CD8-positive, alpha-beta T cell (primary cell): ENCODE measurements at regions of chr11 and their contacts with region 1.

Region 1: DNA sequence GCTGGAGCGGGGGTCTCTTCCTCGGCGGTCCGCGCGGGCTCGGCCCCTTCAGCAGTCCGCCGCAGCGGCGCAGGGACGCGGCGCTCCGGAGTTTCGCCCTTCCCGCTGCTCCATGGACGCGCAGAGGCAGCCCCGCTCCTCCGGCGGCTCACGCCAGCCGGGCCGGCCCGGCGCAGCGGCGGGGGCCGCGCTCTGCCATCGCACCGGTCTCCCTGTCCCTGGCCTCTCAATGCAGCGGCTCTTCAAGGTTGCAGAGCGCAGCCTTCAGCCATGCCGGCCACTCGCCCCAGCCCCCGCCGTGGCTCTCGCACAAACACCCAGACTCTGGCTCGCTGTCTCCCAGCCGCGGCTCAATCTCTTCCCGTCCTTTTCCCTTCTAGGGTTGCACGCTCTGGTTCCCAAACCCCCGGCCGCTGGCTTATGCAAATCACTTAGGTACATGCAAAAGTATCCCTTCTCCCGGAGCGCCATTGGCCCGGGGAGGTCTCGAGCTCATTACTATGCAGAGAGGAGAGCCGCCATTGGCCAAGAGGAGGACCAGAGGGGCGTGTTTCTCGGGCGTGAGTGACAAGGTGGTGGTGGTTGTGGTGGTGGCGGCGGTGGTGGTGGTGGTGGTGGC is at the start of gene LGR4:
- DNase-seq: peak; percentile 39 to 81 (median 70)
- ATAC-seq: peak; percentile 91
- H3K4me3 ChIP-seq: peak within 1 kb of the TSS; percentile 62 to 72
- H3K4me3 Mint-ChIP-seq: peak within 1 kb of the TSS; percentile 92
- H3K27ac ChIP-seq: no peak within 1 kb of the TSS
- H3K27ac Mint-ChIP-seq: no peak within 1 kb of the TSS
- H3K4me1 ChIP-seq: peaks cover 8% of the 10 kb centered on the region
- H3K4me1 Mint-ChIP-seq: peaks cover 15% of the 10 kb centered on the region
- H3K27me3 ChIP-seq: no peaks in the 10 kb centered on the region
- H3K27me3 Mint-ChIP-seq: peaks cover 31% of the 10 kb centered on the region
- CTCF ChIP-seq: no peak
- total RNA-seq, gene LGR4: 0.22 to 0.90 TPM

Region 2: GRCh38 chr11:27331981-27332380 is 140.5 kb before region 1 on chr11:
- CTCF ChIA-PET with region 1: no interaction called
- POLR2A ChIA-PET with region 1: no interaction called
- intact Hi-C with region 1: no loop called
- DNase-seq: no peak
- ATAC-seq: no peak
- H3K4me3 ChIP-seq: no peak overlapping the region
- H3K4me3 Mint-ChIP-seq: no peak overlapping the region
- H3K27ac ChIP-seq: no peak overlapping the region
- H3K27ac Mint-ChIP-seq: no peak overlapping the region
- H3K4me1 ChIP-seq: no peaks in the 10 kb centered on the region
- H3K4me1 Mint-ChIP-seq: no peaks in the 10 kb centered on the region
- H3K27me3 ChIP-seq: no peaks in the 10 kb centered on the region
- H3K27me3 Mint-ChIP-seq: no peaks in the 10 kb centered on the region
- CTCF ChIP-seq: no peak

Region 3: DNA sequence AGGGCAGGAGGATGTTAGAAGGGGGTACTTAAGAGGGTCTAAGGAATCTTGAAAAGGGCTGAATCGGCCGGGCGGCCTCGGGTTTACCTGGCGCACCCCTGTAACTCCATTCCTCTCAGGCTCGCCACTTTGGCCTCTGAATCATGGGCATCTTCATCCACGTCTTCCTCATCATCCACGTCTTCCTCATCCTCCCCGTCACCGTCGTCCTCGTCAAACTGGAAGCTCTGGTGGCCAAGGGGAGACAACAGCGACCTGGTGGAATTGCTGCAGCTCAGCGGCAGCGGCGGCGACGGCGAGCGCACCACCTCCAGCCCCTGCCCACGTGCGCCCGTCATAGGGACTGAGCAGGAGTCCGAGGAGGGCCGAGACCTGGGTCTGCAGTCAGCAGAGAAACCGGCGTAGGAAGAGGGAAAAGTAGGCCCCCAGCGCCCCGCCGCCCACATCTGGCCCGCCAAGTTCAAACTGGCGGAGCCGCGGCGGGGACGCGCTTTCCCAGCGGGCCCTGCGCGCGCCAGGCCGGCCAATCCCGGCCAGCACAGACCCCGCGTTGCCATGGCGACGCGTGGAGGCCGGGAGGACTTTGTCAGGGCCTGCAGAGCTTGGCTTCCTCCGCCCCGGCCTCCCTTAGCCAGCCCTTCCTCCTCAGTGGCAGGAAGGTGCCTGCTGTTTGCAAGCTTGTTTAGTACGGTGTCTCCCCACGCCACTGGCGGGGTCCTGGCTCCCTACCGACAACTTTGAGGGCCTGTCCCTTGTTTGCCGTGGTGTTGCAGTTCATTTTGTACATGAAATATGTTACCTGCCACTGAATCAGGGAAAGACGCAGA is 109.5 kb before region 1 on chr11 and contains the start of gene CCDC34:
- CTCF ChIA-PET with region 1: no interaction called
- POLR2A ChIA-PET with region 1: no interaction called
- intact Hi-C with region 1: loop called (anchors 1 to 5 kb)
- DNase-seq: peak; percentile 72 to 96 (median 87)
- ATAC-seq: peak; percentile 98
- H3K4me3 ChIP-seq: peak within 1 kb of the TSS; percentile 84 to 97
- H3K4me3 Mint-ChIP-seq: peak within 1 kb of the TSS; percentile 93
- H3K27ac ChIP-seq: peak within 1 kb of the TSS; percentile 36 to 46
- H3K27ac Mint-ChIP-seq: peak within 1 kb of the TSS; percentile 89
- H3K4me1 ChIP-seq: peaks cover 12% of the 10 kb centered on the region
- H3K4me1 Mint-ChIP-seq: peaks cover 32% of the 10 kb centered on the region
- H3K27me3 ChIP-seq: no peaks in the 10 kb centered on the region
- H3K27me3 Mint-ChIP-seq: no peaks in the 10 kb centered on the region
- CTCF ChIP-seq: no peak
- total RNA-seq, gene CCDC34: 0.89 to 1.1 TPM

Region 4: GRCh38 chr11:27497284-27497866 is 24.9 kb after region 1 on chr11:
- CTCF ChIA-PET with region 1: interaction called, 8 read pairs
- POLR2A ChIA-PET with region 1: interaction called, 5 read pairs
- intact Hi-C with region 1: loop called in 1 of 2 experiments (anchors 2 kb)
- DNase-seq: peak in 2 of 9 experiments; percentile 22 to 46
- ATAC-seq: no peak
- H3K4me3 ChIP-seq: no peak overlapping the region
- H3K4me3 Mint-ChIP-seq: no peak overlapping the region
- H3K27ac ChIP-seq: no peak overlapping the region
- H3K27ac Mint-ChIP-seq: no peak overlapping the region
- H3K4me1 ChIP-seq: peaks cover 6% of the 10 kb centered on the region
- H3K4me1 Mint-ChIP-seq: peaks cover 25% of the 10 kb centered on the region
- H3K27me3 ChIP-seq: no peaks in the 10 kb centered on the region
- H3K27me3 Mint-ChIP-seq: no peaks in the 10 kb centered on the region
- CTCF ChIP-seq: peak; percentile 59

Region 5: GRCh38 chr11:27861706-27862430 is 389.4 kb after region 1 on chr11:
- CTCF ChIA-PET with region 1: no interaction called
- POLR2A ChIA-PET with region 1: no interaction called
- intact Hi-C with region 1: no loop called
- DNase-seq: no peak
- ATAC-seq: no peak
- H3K4me3 ChIP-seq: no peak overlapping the region
- H3K4me3 Mint-ChIP-seq: no peak overlapping the region
- H3K27ac ChIP-seq: no peak overlapping the region
- H3K27ac Mint-ChIP-seq: no peak overlapping the region
- H3K4me1 ChIP-seq: no peaks in the 10 kb centered on the region
- H3K4me1 Mint-ChIP-seq: no peaks in the 10 kb centered on the region
- H3K27me3 ChIP-seq: no peaks in the 10 kb centered on the region
- H3K27me3 Mint-ChIP-seq: peaks cover 5% of the 10 kb centered on the region
- CTCF ChIP-seq: no peak